ENCODE measurements at regions of chr10 and their contacts with region 1.

Region 1: GRCh38 chr10:103244663-103245271 is 920 bp upstream of the RPEL1 start:
- DNase-seq: peak; percentile 82
- ATAC-seq: peak; percentile 73
- H3K4me3 ChIP-seq: no peak overlapping the region
- H3K27ac ChIP-seq: no peak overlapping the region
- H3K4me1 ChIP-seq: peaks cover 27 to 36% of the 10 kb centered on the region in 2 experiments
- H3K27me3 ChIP-seq: no peaks in the 10 kb centered on the region
- CTCF ChIP-seq: peak in 2 of 3 experiments; percentile 95 to 99; a peak in 4 of 6 replicates
- POLR2A ChIP-seq: no peak
- RAD21 ChIP-seq: no peak

Region 2: GRCh38 chr10:102835007-102835482 is 409.7 kb before region 1 on chr10:
- CTCF ChIA-PET with region 1: interaction called, 10 read pairs
- POLR2A ChIA-PET with region 1: no interaction called
- RAD21 ChIA-PET with region 1: interaction called, 3 read pairs
- intact Hi-C with region 1: loop called (anchors 1 kb)
- DNase-seq: peak; percentile 77
- ATAC-seq: peak; percentile 100
- H3K4me3 ChIP-seq: no peak overlapping the region
- H3K27ac ChIP-seq: no peak overlapping the region
- H3K4me1 ChIP-seq: no peaks in the 10 kb centered on the region; a peak in 1 of 4 replicates
- H3K27me3 ChIP-seq: no peaks in the 10 kb centered on the region; the same call in 1 of the 2 replicates
- CTCF ChIP-seq: peak; percentile 92 to 99 (median 93)
- POLR2A ChIP-seq: no peak
- RAD21 ChIP-seq: peak; percentile 98

Region 3: DNA sequence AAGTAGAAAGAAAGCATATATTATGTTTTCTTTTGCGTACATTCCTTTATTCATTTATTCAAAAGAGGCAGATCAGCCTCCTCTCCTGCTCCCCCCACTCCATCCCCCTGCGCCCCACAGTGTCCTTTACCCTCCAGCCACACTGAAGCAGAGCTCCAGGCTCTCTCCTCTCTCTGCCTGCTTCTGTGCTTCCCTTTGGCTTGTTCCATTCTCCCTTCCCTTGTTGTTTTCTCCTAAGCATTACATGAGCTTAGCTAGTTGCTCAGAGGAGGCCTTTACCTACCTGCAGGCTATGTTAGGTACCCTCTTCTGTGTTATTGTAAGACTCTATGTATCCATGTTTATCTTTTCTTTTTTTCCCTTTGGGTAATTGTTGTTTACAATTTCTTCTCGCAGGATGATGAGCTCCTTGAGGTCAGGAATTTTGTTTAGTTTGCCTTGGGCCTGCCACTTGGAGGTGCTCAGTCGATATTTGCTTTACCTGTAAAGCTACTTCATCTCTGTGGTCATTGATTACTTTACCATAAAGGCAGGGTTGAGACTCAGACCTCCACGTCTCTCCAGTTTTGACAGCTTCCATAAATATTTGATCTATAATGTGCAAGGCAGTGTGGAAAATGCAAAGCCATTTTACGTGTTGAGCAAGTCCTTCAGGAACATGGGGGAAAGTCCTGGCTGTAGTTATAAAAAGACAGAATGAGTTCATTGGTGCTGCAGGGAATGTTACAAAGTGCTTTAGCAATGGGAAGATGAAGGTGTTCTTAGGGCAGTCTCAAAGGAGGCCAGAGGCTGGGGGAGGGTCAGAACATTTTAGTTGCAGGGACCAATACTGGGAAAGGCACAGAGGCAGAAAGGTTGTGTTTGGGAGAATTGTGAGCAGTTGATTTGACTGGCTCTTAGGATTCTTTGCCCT is 299.1 kb before region 1 on chr10:
- CTCF ChIA-PET with region 1: no interaction called
- POLR2A ChIA-PET with region 1: no interaction called
- RAD21 ChIA-PET with region 1: no interaction called
- intact Hi-C with region 1: no loop called
- DNase-seq: no peak
- ATAC-seq: no peak
- H3K4me3 ChIP-seq: no peak overlapping the region
- H3K27ac ChIP-seq: no peak overlapping the region
- H3K4me1 ChIP-seq: no peaks in the 10 kb centered on the region
- H3K27me3 ChIP-seq: no peaks in the 10 kb centered on the region
- CTCF ChIP-seq: no peak
- POLR2A ChIP-seq: no peak
- RAD21 ChIP-seq: no peak

Region 4: DNA sequence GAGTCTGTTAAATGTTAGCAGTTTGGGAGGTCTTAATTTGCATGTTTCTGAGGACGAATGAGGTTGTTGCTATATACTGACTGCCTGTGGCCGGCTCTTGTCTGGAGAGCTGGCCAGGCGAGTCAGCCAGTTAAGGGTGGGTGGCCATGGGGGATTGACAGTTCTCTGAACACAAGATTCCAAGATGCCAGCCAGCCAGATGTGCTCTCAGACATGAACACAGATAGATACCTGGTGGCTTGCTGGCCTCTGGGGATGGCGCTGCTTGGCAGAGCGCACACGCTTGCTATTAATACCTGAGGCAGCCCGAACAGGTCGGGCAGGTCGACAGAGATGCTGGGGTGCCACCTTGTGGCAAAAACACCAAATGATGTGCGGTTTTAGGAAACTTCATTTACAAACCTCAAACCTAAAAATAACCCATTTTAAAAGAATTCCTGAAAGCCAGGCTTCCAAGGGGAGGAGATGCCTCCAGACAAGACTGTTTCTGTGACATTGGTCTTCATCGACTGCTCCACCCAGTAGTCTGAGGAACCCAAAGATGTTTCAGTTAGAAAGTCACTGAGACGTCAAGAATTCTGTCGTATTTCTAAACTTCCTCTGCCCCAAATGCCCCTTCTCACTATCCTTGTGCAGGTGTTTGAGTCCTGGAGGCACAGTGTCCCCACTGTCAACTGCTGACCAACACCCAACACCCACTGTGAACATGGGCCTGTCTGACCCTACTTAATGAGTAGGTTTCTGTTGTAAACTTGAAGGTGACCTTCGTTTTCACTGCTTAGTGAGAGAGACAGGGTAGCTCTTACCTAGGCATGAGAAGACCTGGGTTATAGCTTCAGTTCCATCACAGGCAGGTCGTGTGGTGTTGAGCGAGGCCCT is 175.1 kb before region 1 on chr10:
- CTCF ChIA-PET with region 1: interaction called, 5 read pairs
- POLR2A ChIA-PET with region 1: no interaction called
- RAD21 ChIA-PET with region 1: no interaction called
- intact Hi-C with region 1: loop called (anchors 1 kb)
- DNase-seq: peak; percentile 59
- ATAC-seq: peak; percentile 93
- H3K4me3 ChIP-seq: no peak overlapping the region
- H3K27ac ChIP-seq: no peak overlapping the region
- H3K4me1 ChIP-seq: peaks cover 3 to 6% of the 10 kb centered on the region in 2 experiments; a peak in 1 of 4 replicates
- H3K27me3 ChIP-seq: no peaks in the 10 kb centered on the region
- CTCF ChIP-seq: peak; percentile 75 to 98 (median 94)
- POLR2A ChIP-seq: no peak
- RAD21 ChIP-seq: peak; percentile 98

Region 5: DNA sequence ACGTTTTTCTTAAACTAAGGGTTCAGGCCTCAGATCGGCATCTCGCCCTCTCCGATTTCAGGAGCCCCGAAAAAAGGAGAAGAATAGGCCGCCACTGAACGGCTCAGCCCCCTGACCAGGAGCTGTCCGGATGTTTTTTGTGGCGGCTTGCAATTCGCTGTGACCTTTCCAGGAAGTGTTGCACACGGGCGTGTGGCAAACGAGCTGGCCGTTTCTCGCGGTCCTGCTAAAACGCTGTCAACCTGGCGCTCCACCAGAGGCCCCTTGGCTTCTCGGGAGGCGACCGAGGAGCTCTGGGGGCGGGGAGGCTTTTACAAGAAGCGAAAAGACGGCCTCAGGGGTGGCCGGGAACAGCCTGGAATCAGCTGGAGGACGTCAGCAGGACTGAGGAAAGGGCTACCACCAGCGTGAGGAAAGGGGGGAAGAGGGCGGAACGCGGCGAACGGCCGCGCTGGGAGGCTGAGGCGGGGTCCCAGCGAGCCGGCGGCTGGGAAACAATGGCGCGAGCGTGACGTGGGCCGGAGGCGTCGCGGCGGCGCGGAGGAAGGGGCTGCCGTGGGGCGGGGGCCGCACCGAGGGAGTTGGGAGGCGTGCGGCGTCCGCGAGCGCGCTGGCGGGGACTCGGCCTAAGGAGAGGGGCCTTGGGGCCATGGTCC is 52.2 kb before region 1 on chr10:
- CTCF ChIA-PET with region 1: interaction called, 11 read pairs
- POLR2A ChIA-PET with region 1: interaction called, 8 read pairs
- RAD21 ChIA-PET with region 1: interaction called in 1 of 2 experiments, 3 read pairs
- intact Hi-C with region 1: loop called (anchors 2 kb)
- DNase-seq: peak; percentile 55
- ATAC-seq: peak; percentile 58
- H3K4me3 ChIP-seq: peak overlapping the region; percentile 80 to 91
- H3K27ac ChIP-seq: peak overlapping the region; percentile 86
- H3K4me1 ChIP-seq: peaks cover 35 to 41% of the 10 kb centered on the region in 2 experiments
- H3K27me3 ChIP-seq: no peaks in the 10 kb centered on the region
- CTCF ChIP-seq: no peak
- POLR2A ChIP-seq: no peak
- RAD21 ChIP-seq: peak; percentile 20; the same call in 1 of the 2 replicates

Region 6: GRCh38 chr10:103333925-103334520 is 89.3 kb after region 1 on chr10:
- CTCF ChIA-PET with region 1: interaction called, 27 read pairs
- POLR2A ChIA-PET with region 1: no interaction called
- RAD21 ChIA-PET with region 1: interaction called, 3 read pairs
- intact Hi-C with region 1: loop called (anchors 1 kb)
- DNase-seq: peak; percentile 32
- ATAC-seq: no peak
- H3K4me3 ChIP-seq: no peak overlapping the region
- H3K27ac ChIP-seq: no peak overlapping the region
- H3K4me1 ChIP-seq: no peaks in the 10 kb centered on the region
- H3K27me3 ChIP-seq: no peaks in the 10 kb centered on the region
- CTCF ChIP-seq: peak; percentile 68 to 90 (median 77)
- POLR2A ChIP-seq: no peak
- RAD21 ChIP-seq: peak; percentile 84

Region 7: DNA sequence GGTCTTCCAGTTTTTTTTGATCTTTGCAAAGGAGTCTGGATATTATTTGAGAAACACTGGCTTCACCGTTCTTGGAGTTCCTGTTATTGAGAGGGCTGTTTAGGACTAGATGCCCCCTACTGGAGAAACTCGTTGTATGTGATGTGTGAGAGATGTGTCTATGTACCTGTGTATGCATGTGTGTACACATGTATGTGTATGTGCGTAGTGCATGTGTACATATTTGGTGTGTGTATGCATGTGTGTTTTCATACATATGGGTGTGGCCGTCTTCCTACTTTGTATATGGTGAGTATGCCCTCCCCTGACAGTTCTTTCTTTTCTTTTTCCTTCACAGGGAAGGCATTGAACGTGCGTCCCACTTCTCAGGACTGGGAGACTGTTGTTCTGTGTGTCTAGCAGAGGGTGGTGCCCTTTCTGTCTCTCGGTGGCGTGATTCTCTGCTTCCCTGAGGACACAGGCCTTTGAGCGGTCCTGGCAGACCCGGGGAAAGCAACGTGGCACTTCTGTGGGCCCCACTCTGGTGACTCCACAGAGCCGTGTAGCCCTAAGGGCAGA is 237.3 kb after region 1 on chr10:
- CTCF ChIA-PET with region 1: interaction called, 9 read pairs
- POLR2A ChIA-PET with region 1: no interaction called
- RAD21 ChIA-PET with region 1: no interaction called
- intact Hi-C with region 1: loop called (anchors 5 kb)
- DNase-seq: peak; percentile 87
- ATAC-seq: peak; percentile 69
- H3K4me3 ChIP-seq: no peak overlapping the region
- H3K27ac ChIP-seq: no peak overlapping the region
- H3K4me1 ChIP-seq: peaks cover 18 to 45% of the 10 kb centered on the region in 2 experiments
- H3K27me3 ChIP-seq: no peaks in the 10 kb centered on the region
- CTCF ChIP-seq: peak; percentile 83 to 91 (median 87)
- POLR2A ChIP-seq: no peak
- RAD21 ChIP-seq: peak; percentile 82

Region 8: DNA sequence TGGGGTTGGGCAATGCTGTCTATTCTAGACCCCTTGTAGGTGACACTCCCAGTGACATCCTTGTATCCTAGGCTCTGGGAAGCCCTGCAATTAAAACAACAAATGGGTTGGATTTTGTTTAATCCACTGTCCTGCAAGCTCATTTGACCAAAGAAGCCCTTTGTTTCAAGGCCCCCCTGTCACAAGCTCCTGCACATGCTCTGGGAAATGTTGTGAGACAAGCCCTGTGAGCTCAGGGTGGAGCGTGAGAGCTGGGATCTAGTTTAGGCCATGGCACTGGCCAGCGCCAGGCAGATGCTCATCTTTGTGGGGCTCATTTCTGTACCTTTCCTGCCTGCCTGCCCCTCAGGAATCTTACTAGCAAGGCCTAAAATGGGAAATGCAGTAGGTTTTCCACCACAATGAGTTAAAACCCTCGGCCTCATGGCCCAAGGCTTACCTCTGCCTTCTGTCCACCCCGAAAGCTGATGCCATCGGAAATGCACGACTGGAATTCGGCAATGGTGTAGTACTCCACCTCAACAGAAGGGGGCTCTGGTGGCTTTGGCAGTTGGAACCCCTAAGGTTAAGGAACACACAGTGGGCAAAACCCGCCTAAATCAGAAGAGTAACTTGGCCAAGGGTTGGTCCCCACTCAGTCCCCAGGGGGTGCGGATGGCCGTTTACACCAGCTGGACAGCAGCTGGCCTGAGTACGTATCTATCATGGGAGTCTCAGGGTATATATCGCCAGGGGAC is 360.8 kb after region 1 on chr10:
- CTCF ChIA-PET with region 1: no interaction called
- POLR2A ChIA-PET with region 1: no interaction called
- RAD21 ChIA-PET with region 1: no interaction called
- intact Hi-C with region 1: no loop called
- DNase-seq: peak; percentile 28
- ATAC-seq: peak; percentile 84
- H3K4me3 ChIP-seq: no peak overlapping the region
- H3K27ac ChIP-seq: no peak overlapping the region
- H3K4me1 ChIP-seq: no peaks in the 10 kb centered on the region
- H3K27me3 ChIP-seq: no peaks in the 10 kb centered on the region
- CTCF ChIP-seq: peak; percentile 67 to 93 (median 92); a peak in 5 of 6 replicates
- POLR2A ChIP-seq: no peak
- RAD21 ChIP-seq: peak; percentile 77